ENCODE measurements at regions of chr19 and their contacts with region 1.

Region 1: GRCh38 chr19:16584248-16585141 is 12.3 kb upstream of the SLC35E1 start:
- DNase-seq: peak; percentile 98
- ATAC-seq: peak; percentile 55
- H3K4me3 ChIP-seq: peak overlapping the region; percentile 79
- H3K27ac ChIP-seq: peak overlapping the region; percentile 99
- H3K4me1 ChIP-seq: peaks cover 52% of the 10 kb centered on the region
- H3K27me3 ChIP-seq: no peaks in the 10 kb centered on the region
- CTCF ChIP-seq: no peak
- EP300 ChIP-seq: peak; percentile 86 to 93
- POLR2A ChIP-seq: peak; percentile 94
- RAD21 ChIP-seq: no peak; the same call in 1 of the 2 replicates

Region 2: GRCh38 chr19:14577885-14578427 is 2006.5 kb before region 1 on chr19:
- CTCF ChIA-PET with region 1: no interaction called
- POLR2A ChIA-PET with region 1: no interaction called
- RAD21 ChIA-PET with region 1: no interaction called
- SMC1A ChIA-PET with region 1: no interaction called
- in situ Hi-C with region 1: loop called (anchors 25 kb)
- intact Hi-C with region 1: no loop called
- DNase-seq: peak; percentile 53
- ATAC-seq: peak; percentile 69
- H3K4me3 ChIP-seq: no peak overlapping the region
- H3K27ac ChIP-seq: peak overlapping the region; percentile 41; the same call in 1 of the 2 replicates
- H3K4me1 ChIP-seq: peaks cover 26% of the 10 kb centered on the region
- H3K27me3 ChIP-seq: no peaks in the 10 kb centered on the region
- CTCF ChIP-seq: peak in 2 of 3 experiments; percentile 5 to 21; a peak in 1 of 6 replicates
- EP300 ChIP-seq: no peak
- POLR2A ChIP-seq: no peak
- RAD21 ChIP-seq: peak; percentile 13

Region 3: GRCh38 chr19:16143399-16144245 is 440.9 kb before region 1 on chr19 and contains the start of gene HSH2D:
- CTCF ChIA-PET with region 1: interaction called, 3 read pairs
- POLR2A ChIA-PET with region 1: no interaction called
- RAD21 ChIA-PET with region 1: no interaction called
- SMC1A ChIA-PET with region 1: no interaction called
- in situ Hi-C with region 1: no loop called
- intact Hi-C with region 1: loop called (anchors 5 kb)
- DNase-seq: peak; percentile 90
- ATAC-seq: peak; percentile 70
- H3K4me3 ChIP-seq: peak within 1 kb of the TSS; percentile 92
- H3K27ac ChIP-seq: peak within 1 kb of the TSS; percentile 99
- H3K4me1 ChIP-seq: peaks cover 37% of the 10 kb centered on the region
- H3K27me3 ChIP-seq: no peaks in the 10 kb centered on the region
- CTCF ChIP-seq: no peak
- EP300 ChIP-seq: peak in 1 of 2 experiments; percentile 81; a peak in 1 of 4 replicates
- POLR2A ChIP-seq: peak; percentile 97
- RAD21 ChIP-seq: no peak
- polyA plus RNA-seq, gene HSH2D: 22.0 to 27.2 TPM

Region 4: DNA sequence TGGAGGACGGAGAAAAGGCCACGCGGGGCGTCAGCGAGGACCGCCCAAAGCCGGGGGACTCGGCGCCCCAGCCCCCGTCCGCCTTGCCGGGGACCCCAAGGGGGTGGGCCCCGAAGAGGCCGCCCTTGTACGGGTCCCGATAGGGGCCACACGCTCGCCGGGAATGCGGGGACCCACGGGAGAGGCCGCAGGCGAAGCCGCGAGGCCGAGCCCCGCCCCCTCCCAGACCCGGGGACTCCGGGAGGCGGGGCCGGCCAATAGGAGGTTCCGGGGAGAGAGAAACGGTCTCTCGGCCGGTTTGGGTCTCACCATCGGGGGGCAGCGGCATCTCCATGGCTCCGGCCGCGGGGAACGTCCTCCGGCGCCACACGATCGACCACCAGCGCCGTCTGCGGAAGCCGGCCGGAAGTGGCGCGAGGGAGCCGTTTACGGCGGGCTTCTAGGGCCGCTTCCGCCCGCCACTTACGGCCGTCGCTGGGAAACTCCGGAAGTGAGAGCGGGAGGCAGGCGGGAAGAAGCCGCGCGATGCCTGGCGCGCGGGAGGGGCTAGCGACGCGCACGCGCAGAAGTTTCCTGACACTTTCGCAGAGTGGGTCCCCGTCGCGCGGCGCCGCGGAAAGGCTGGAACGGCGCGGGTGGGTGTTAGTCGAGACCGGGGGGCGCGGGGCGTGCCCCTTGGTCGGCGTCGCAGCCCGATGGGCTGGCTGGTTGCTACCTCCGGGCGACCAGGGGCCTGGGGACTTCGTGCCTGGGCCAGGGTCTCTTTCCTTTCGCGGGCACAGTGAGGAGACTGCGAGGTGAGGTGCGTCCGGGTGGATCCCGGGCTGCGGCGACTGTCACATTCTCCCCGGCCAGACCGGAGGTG is 42.2 kb before region 1 on chr19 and contains the start of gene CHERP:
- CTCF ChIA-PET with region 1: interaction called, 7 read pairs
- POLR2A ChIA-PET with region 1: interaction called, 72 read pairs
- RAD21 ChIA-PET with region 1: interaction called, 20 read pairs
- SMC1A ChIA-PET with region 1: interaction called, 11 read pairs
- in situ Hi-C with region 1: no loop called
- intact Hi-C with region 1: loop called (anchors 1 kb)
- DNase-seq: peak; percentile 72
- ATAC-seq: peak; percentile 83
- H3K4me3 ChIP-seq: peak within 1 kb of the TSS; percentile 99
- H3K27ac ChIP-seq: peak within 1 kb of the TSS; percentile 74
- H3K4me1 ChIP-seq: peaks cover 14% of the 10 kb centered on the region
- H3K27me3 ChIP-seq: no peaks in the 10 kb centered on the region
- CTCF ChIP-seq: no peak
- EP300 ChIP-seq: no peak
- POLR2A ChIP-seq: peak; percentile 93
- RAD21 ChIP-seq: no peak
- polyA plus RNA-seq, gene CHERP: 0.66 to 1.7 TPM

Region 5: GRCh38 chr19:16608290-16608739 is 23.8 kb after region 1 on chr19:
- CTCF ChIA-PET with region 1: interaction called, 4 read pairs
- POLR2A ChIA-PET with region 1: interaction called, 13 read pairs
- RAD21 ChIA-PET with region 1: interaction called, 10 read pairs
- SMC1A ChIA-PET with region 1: interaction called, 10 read pairs
- in situ Hi-C with region 1: no loop called
- intact Hi-C with region 1: no loop called
- DNase-seq: no peak
- ATAC-seq: peak; percentile 33
- H3K4me3 ChIP-seq: no peak overlapping the region
- H3K27ac ChIP-seq: no peak overlapping the region
- H3K4me1 ChIP-seq: peaks cover 43% of the 10 kb centered on the region
- H3K27me3 ChIP-seq: no peaks in the 10 kb centered on the region
- CTCF ChIP-seq: no peak
- EP300 ChIP-seq: no peak
- POLR2A ChIP-seq: no peak
- RAD21 ChIP-seq: no peak

Region 6: GRCh38 chr19:16628183-16628983 is 43.9 kb after region 1 on chr19 and contains the start of gene MED26:
- CTCF ChIA-PET with region 1: interaction called, 83 read pairs
- POLR2A ChIA-PET with region 1: interaction called, 220 read pairs
- RAD21 ChIA-PET with region 1: interaction called, 169 read pairs
- SMC1A ChIA-PET with region 1: interaction called, 164 read pairs
- in situ Hi-C with region 1: loop called (anchors 5 kb)
- intact Hi-C with region 1: loop called (anchors 2 kb)
- DNase-seq: peak; percentile 53
- ATAC-seq: peak; percentile 88
- H3K4me3 ChIP-seq: peak within 1 kb of the TSS; percentile 94
- H3K27ac ChIP-seq: peak within 1 kb of the TSS; percentile 97
- H3K4me1 ChIP-seq: peaks cover 25% of the 10 kb centered on the region
- H3K27me3 ChIP-seq: no peaks in the 10 kb centered on the region
- CTCF ChIP-seq: 0 out of 6 replicates have a peak, but pooled peaks of 1 of the 3 experiments have one; percentile 3
- EP300 ChIP-seq: no peak
- POLR2A ChIP-seq: peak; percentile 88
- RAD21 ChIP-seq: peak; percentile 20; the same call in 1 of the 2 replicates
- polyA plus RNA-seq, gene MED26: 1.1 to 2.2 TPM